ENCODE measurements at regions of chr11 and their contacts with region 1.

Region 1: GRCh38 chr11:35844579-35844978 is 99.3 kb upstream of the LDLRAD3 start:
- DNase-seq: no peak
- H3K4me3 Mint-ChIP-seq: no peak overlapping the region
- H3K27ac Mint-ChIP-seq: no peak overlapping the region
- H3K4me1 Mint-ChIP-seq: no peaks in the 10 kb centered on the region
- H3K27me3 Mint-ChIP-seq: peaks cover 64% of the 10 kb centered on the region
- CTCF ChIP-seq: no peak

Region 2: GRCh38 chr11:36300651-36301050 is 456.1 kb after region 1 on chr11:
- CTCF ChIA-PET with region 1: interaction called, 11 read pairs
- intact Hi-C with region 1: no loop called
- DNase-seq: no peak
- H3K4me3 Mint-ChIP-seq: no peak overlapping the region
- H3K27ac Mint-ChIP-seq: no peak overlapping the region
- H3K4me1 Mint-ChIP-seq: no peaks in the 10 kb centered on the region
- H3K27me3 Mint-ChIP-seq: peaks cover 52% of the 10 kb centered on the region
- CTCF ChIP-seq: no peak

Measured in Calu3 (cell line).